ENCODE measurements at regions of chr5 and their contacts with region 1.

Region 1: GRCh38 chr5:83564069-83564749 is 92.7 kb downstream of the VCAN start:
- DNase-seq: no peak

Region 2: GRCh38 chr5:82312373-82312856 is 1251.8 kb before region 1 on chr5:
- intact Hi-C with region 1: loop called in 1 of 2 experiments (anchors 10 kb)
- DNase-seq: peak; percentile 88

Region 3: DNA sequence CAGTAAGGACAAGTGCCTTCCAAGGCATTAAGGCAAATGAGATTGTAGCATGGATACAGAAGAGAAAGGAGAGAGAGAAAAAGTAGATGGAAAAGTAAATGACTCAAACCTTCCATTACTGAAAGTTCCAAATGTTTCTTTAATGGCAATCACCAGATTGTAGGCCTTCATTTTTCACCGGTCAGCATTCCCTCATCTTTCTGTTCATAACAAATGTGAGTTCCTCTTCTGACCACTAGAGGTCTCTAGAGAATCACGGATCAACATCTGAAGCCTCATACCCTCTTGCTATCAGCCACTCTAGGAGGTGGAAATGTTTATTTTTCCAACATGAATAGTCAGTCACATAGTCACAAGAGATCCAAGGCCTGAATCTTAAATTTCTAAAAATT is 1212.5 kb before region 1 on chr5:
- intact Hi-C with region 1: loop called in 1 of 2 experiments (anchors 10 kb)
- DNase-seq: no peak

Region 4: DNA sequence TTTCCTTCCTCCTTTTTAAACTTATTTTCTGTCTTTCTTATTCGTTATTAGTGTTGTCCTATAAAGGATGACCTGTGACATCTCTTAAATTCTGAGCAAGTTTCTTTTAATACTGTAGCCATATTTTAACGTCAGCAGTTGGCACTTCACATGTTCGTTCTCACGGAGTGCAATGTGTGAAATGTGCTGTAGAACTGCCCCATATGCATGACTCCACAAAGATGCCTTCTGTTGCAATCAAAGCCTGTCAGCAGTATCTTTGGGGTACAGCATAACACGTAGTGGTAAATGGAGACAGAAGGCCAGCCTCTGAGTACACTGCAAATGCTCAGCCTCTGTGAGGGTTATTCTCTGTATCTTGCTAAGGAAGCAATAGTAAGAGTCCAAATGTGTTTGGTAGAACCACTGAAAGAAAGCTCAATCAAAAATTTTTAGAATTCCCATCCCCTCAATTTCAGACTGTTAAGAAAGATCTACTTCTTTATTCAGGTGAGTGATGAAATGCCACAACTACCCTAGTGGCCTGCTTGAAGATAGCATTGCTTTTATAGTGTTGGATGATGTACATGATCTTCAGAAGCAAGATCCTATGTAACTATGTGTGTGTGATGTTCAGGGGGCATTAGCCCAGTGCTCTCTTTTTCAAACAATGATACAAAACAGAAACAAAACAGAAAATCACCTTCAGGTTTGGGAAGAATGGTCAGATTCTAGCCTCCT is 764.7 kb before region 1 on chr5:
- intact Hi-C with region 1: no loop called
- DNase-seq: no peak

Region 5: DNA sequence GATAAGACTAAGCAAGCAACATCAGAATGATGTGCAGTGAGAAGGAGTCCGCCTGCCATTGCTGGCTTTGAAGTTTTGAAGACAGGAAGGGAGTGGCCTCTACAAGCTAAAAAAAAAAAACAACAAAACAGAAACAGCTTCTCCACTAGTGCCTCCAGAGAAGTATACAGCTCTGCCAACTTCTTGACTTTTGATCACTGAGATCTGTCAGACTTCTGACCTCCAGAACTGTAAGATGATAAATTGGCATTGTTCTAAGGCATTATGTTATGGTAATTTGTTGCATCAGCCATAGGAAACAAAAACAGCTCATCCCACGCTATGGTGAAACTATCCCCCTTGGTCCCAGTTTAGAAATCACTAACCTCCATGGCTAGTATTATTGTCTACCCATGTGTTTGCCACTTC is 223.7 kb before region 1 on chr5:
- intact Hi-C with region 1: no loop called
- DNase-seq: no peak